WTC11 (cell line): ENCODE measurements at regions of chr22 and their contacts with region 1.

Region 1: GRCh38 chr22:26502688-26503561 is 9.3 kb downstream of the TFIP11 start:
- DNase-seq: peak; percentile 73
- ATAC-seq: peak; percentile 97
- H3K4me3 Mint-ChIP-seq: no peak overlapping the region
- H3K27ac Mint-ChIP-seq: peak overlapping the region; percentile 82
- H3K4me1 Mint-ChIP-seq: peaks cover 9% of the 10 kb centered on the region
- H3K27me3 Mint-ChIP-seq: no peaks in the 10 kb centered on the region
- CTCF ChIP-seq: peak; percentile 32; the same call in 1 of the 2 replicates

Region 2: DNA sequence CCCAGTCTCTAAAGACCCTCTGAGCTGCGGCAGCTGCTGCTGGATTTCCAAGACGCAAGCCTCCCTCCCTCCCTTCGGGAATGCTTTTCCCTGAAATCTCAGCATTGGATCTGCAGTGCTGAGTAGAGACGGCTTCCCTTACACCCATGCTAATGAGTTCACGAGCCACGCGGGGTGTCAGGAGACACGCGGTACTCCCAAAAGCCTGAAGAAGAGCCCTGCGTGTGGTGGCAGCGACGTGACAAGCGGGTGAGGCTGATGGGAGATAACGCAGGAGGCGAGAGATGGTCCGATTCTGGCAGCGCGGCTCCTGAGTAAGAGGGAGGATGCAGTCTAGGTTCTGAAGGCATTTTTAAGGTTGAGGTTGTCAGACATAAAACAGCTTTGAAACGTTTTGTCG is 148.2 kb before region 1 on chr22:
- CTCF ChIA-PET with region 1: no interaction called
- POLR2A ChIA-PET with region 1: no interaction called
- DNase-seq: no peak
- ATAC-seq: no peak
- H3K4me3 Mint-ChIP-seq: no peak overlapping the region
- H3K27ac Mint-ChIP-seq: no peak overlapping the region
- H3K4me1 Mint-ChIP-seq: no peaks in the 10 kb centered on the region
- H3K27me3 Mint-ChIP-seq: peaks cover 3% of the 10 kb centered on the region; the same call in 1 of the 2 replicates
- CTCF ChIP-seq: no peak

Region 3: GRCh38 chr22:26461188-26461810 is 41.6 kb before region 1 on chr22:
- CTCF ChIA-PET with region 1: no interaction called
- POLR2A ChIA-PET with region 1: no interaction called
- DNase-seq: peak; percentile 88
- ATAC-seq: peak; percentile 99
- H3K4me3 Mint-ChIP-seq: no peak overlapping the region
- H3K27ac Mint-ChIP-seq: peak overlapping the region; percentile 84; the same call in 1 of the 2 replicates
- H3K4me1 Mint-ChIP-seq: peaks cover 4% of the 10 kb centered on the region; the same call in 1 of the 2 replicates
- H3K27me3 Mint-ChIP-seq: no peaks in the 10 kb centered on the region
- CTCF ChIP-seq: peak; percentile 57; the same call in 1 of the 2 replicates

Region 4: GRCh38 chr22:26558248-26558895 is 55.4 kb after region 1 on chr22:
- CTCF ChIA-PET with region 1: no interaction called
- POLR2A ChIA-PET with region 1: no interaction called
- DNase-seq: no peak
- ATAC-seq: no peak
- H3K4me3 Mint-ChIP-seq: no peak overlapping the region
- H3K27ac Mint-ChIP-seq: peak overlapping the region; percentile 90
- H3K4me1 Mint-ChIP-seq: peaks cover 82% of the 10 kb centered on the region
- H3K27me3 Mint-ChIP-seq: no peaks in the 10 kb centered on the region; the same call in 1 of the 2 replicates
- CTCF ChIP-seq: no peak

Region 5: DNA sequence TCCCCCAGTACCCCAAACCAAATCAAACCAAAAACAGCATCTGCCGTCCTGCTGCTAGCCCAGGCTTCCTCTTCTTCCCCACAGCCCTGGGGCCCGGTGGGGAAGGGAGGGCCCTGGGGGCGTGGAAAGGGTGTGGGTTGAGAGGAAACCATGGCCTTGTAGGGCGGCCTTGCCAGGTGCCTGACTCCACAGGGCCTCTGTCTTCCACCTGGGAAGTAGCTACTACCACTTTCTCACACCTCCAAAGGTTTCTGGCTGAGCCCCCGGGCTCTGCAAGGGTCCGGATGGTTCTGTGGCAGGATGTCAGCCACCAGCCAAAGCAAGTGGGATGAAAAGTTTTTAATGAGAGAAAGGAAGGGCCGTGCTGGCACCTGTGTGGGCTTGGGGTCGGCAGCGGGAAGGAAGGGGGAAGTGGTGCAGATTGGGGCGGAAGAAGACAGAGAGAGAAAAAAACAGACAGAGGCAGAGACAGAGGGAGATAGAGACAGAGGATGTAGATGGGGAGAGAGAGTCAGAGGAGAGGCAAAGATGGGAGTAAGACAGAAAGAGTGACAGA is 76.5 kb after region 1 on chr22:
- CTCF ChIA-PET with region 1: interaction called, 4 read pairs
- POLR2A ChIA-PET with region 1: interaction called, 10 read pairs
- DNase-seq: no peak
- ATAC-seq: peak; percentile 27
- H3K4me3 Mint-ChIP-seq: peak overlapping the region; percentile 23; the same call in 1 of the 2 replicates
- H3K27ac Mint-ChIP-seq: peak overlapping the region; percentile 95; the same call in 1 of the 2 replicates
- H3K4me1 Mint-ChIP-seq: peaks cover 72% of the 10 kb centered on the region
- H3K27me3 Mint-ChIP-seq: no peaks in the 10 kb centered on the region
- CTCF ChIP-seq: no peak

Region 6: GRCh38 chr22:26665813-26666231 is 162.9 kb after region 1 on chr22:
- CTCF ChIA-PET with region 1: interaction called, 28 read pairs
- POLR2A ChIA-PET with region 1: no interaction called
- DNase-seq: no peak
- ATAC-seq: no peak
- H3K4me3 Mint-ChIP-seq: no peak overlapping the region
- H3K27ac Mint-ChIP-seq: no peak overlapping the region; the same call in 1 of the 2 replicates
- H3K4me1 Mint-ChIP-seq: peaks cover 30% of the 10 kb centered on the region
- H3K27me3 Mint-ChIP-seq: no peaks in the 10 kb centered on the region
- CTCF ChIP-seq: no peak

Region 7: GRCh38 chr22:26672590-26673468 is 169.9 kb after region 1 on chr22:
- CTCF ChIA-PET with region 1: interaction called, 14 read pairs
- POLR2A ChIA-PET with region 1: no interaction called
- DNase-seq: peak; percentile 90
- ATAC-seq: peak; percentile 76
- H3K4me3 Mint-ChIP-seq: peak overlapping the region; percentile 89
- H3K27ac Mint-ChIP-seq: peak overlapping the region; percentile 92
- H3K4me1 Mint-ChIP-seq: peaks cover 56% of the 10 kb centered on the region
- H3K27me3 Mint-ChIP-seq: no peaks in the 10 kb centered on the region
- CTCF ChIP-seq: no peak